Activated CD4-positive, alpha-beta memory T cell treated with anti-CD3 and anti-CD28 coated beads, Interleukin-2, amount 10 ng/mL, durations not matched to agents 7 days and 5 days (primary cell): ENCODE measurements at regions of chr2 and their contacts with region 1.

Region 1: DNA sequence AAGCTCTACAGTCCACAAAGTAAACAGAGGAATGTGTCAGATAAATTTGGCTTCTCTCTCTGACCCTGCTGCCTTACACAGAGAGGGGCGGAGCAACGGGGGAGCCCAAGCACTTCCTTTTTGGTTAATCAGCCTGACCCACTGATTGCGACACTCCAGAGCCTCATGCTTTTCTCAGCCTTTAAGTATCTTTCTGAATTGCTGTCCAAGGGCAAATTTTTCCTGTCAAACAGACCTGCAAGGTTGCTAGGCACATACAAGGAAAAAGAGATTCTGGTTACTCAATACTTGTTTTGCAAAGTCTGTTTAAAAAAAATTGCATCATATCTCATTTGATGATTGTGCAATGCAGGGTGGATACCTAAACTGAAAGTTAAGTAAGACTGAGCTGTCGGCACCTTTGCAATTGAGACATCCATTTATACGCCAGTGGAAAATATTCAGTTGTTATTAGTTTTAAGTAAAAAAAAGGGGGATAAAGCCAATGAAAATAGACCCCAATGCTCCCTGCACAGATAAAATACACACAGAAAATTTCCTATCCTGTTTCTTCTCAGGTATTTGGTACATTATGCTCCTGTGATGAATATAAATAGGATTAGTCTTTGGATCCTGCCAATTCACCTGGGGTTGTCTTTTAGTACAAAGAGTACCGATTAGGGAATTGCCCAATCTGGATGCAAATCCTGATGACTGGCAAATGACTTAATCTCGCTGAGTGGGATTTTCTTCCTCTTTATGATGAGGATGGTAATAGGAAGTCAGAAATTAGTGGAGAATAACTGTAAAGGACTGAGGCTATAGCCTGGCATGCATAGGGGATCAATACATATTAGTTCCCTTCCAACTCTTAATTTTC is 260.2 kb upstream of the TRIB2 start:
- DNase-seq: peak; percentile 80
- H3K4me3 Mint-ChIP-seq: peak overlapping the region; percentile 71
- H3K27ac Mint-ChIP-seq: peak overlapping the region; percentile 96
- H3K4me1 Mint-ChIP-seq: peaks cover 43% of the 10 kb centered on the region
- H3K27me3 Mint-ChIP-seq: no peaks in the 10 kb centered on the region

Region 2: GRCh38 chr2:12141618-12142258 is 314.8 kb before region 1 on chr2:
- CTCF ChIA-PET with region 1: no interaction called
- POLR2A ChIA-PET with region 1: no interaction called
- DNase-seq: no peak
- H3K4me3 Mint-ChIP-seq: no peak overlapping the region
- H3K27ac Mint-ChIP-seq: no peak overlapping the region
- H3K4me1 Mint-ChIP-seq: no peaks in the 10 kb centered on the region
- H3K27me3 Mint-ChIP-seq: peaks cover 1% of the 10 kb centered on the region

Region 3: GRCh38 chr2:12442476-12442847 is 14.1 kb before region 1 on chr2:
- CTCF ChIA-PET with region 1: interaction called, 7 read pairs
- POLR2A ChIA-PET with region 1: interaction called, 11 read pairs
- DNase-seq: no peak
- H3K4me3 Mint-ChIP-seq: no peak overlapping the region
- H3K27ac Mint-ChIP-seq: peak overlapping the region; percentile 65
- H3K4me1 Mint-ChIP-seq: peaks cover 25% of the 10 kb centered on the region
- H3K27me3 Mint-ChIP-seq: no peaks in the 10 kb centered on the region

Region 4: DNA sequence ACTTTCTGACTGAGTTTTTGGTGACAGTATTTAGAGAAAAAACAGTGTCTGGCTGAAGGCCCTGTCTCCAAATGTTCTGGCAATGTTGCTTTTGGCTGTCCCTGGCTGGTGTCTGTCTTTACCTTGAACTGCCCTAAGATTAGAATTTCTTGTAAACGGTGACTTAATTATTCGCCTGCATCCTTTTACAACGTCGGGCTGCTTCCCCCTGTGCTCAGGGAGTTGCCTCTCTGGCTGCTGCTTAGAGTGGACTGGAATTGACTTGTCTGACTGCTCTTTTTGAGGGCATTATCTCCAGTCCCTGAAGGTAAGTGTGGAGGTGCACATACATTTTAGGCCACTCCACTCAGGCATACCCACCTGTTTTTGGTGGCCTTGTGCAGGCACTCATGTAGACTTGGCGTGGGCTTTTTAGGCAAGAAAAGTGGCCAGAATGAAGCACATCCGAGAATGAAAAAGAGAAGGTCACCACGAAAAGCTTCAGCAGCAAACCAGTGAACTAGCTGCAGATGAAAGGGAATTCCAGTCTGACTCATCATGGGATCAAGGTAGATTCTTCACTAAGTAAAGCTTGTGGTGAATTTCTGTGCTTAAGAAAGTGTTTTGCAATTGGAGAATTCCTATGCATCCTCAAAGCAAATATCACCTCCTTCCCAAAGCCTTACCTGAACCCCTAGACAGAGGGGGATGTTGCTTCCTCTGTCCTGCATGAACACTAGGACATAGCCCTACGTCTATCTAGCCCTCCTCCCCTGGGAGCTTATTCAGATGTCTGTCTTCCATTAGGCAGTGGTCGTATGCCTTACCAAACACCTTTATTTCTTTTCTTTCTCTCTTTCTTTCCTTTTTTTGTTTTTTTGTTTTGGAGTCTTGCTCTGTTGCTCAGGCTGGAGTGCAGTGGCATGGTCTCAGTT is 29.9 kb after region 1 on chr2:
- CTCF ChIA-PET with region 1: interaction called, 6 read pairs
- POLR2A ChIA-PET with region 1: interaction called, 17 read pairs
- DNase-seq: no peak
- H3K4me3 Mint-ChIP-seq: no peak overlapping the region
- H3K27ac Mint-ChIP-seq: no peak overlapping the region
- H3K4me1 Mint-ChIP-seq: peaks cover 62% of the 10 kb centered on the region
- H3K27me3 Mint-ChIP-seq: no peaks in the 10 kb centered on the region

Region 5: GRCh38 chr2:12514631-12515433 is 58.3 kb after region 1 on chr2:
- CTCF ChIA-PET with region 1: no interaction called
- POLR2A ChIA-PET with region 1: interaction called, 10 read pairs
- DNase-seq: peak; percentile 65
- H3K4me3 Mint-ChIP-seq: peak overlapping the region; percentile 1
- H3K27ac Mint-ChIP-seq: peak overlapping the region; percentile 82
- H3K4me1 Mint-ChIP-seq: peaks cover 41% of the 10 kb centered on the region
- H3K27me3 Mint-ChIP-seq: peaks cover 6% of the 10 kb centered on the region